Panc1 (cell line): ENCODE measurements at regions of chr3 and their contacts with region 1.

Region 1: DNA sequence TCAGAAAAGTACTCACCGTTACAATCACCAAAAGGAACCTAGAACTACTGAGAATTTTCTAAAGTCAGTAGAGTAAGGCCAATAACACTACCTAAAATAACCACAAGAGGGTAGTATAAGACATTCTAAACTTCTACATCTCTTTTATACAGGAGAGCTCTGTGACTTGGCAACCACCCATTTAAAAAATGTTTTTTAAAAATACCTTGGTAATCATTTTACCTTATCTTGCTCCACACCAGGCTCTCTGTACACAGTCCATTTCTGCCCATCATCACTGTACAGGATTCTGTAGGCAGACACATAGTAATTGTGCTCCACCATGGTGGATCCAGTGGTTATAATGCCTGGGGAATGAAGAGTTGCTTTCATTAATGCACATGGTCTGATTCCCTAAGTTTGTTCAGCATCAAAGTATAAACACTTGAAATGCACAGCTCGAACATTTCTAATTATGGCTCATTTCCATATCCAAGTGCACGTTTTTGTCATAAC is 54.5 kb downstream of the ST3GAL6 start:
- DNase-seq: peak; percentile 33
- ATAC-seq: peak; percentile 95
- H3K4me3 ChIP-seq: no peak overlapping the region
- H3K27ac ChIP-seq: no peak overlapping the region
- H3K4me1 ChIP-seq: no peaks in the 10 kb centered on the region
- H3K27me3 ChIP-seq: no peaks in the 10 kb centered on the region
- CTCF ChIP-seq: peak; percentile 73

Region 2: DNA sequence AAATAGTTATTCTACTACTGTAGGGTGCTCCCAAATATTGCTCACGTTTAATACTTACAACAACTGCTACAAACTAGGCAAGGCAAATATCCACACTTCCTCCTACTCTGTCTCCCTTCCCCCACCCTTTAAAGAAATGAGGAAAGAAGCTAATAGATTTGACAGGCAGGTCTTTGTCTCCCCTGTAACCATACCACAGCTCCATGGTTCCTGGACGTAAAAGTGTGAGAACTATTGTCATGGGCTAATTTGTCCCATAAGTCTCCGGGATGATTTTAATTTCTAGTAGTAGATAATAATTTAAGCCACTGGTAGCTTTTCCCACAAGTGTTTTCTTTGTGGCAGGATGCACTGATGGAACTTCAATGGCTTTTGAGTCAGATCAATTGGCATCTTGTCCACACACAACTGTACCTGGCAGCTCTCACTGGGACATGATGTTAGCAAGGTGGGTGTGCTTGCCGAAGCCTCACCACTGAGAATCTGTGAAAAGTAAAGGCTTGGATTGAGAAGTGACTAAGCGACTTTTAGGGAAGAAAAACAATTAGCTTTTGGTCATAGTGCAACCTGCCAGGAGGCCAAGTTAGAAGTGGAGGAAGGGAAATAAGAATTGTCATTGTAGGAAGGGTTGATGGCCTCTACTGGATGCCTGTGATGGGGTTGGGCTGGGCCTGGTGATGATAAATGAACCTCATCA is 222.8 kb before region 1 on chr3:
- CTCF ChIA-PET with region 1: no interaction called
- POLR2A ChIA-PET with region 1: no interaction called
- in situ Hi-C with region 1: no loop called
- intact Hi-C with region 1: loop called (anchors 2 kb)
- DNase-seq: no peak
- ATAC-seq: no peak
- H3K4me3 ChIP-seq: no peak overlapping the region
- H3K27ac ChIP-seq: no peak overlapping the region
- H3K4me1 ChIP-seq: peaks cover 5% of the 10 kb centered on the region
- H3K27me3 ChIP-seq: no peaks in the 10 kb centered on the region; the same call in 1 of the 2 replicates
- CTCF ChIP-seq: no peak

Region 3: GRCh38 chr3:98602078-98602678 is 215.4 kb before region 1 on chr3:
- CTCF ChIA-PET with region 1: interaction called, 7 read pairs
- POLR2A ChIA-PET with region 1: no interaction called
- in situ Hi-C with region 1: no loop called
- intact Hi-C with region 1: loop called (anchors 2 kb)
- DNase-seq: peak; percentile 36
- ATAC-seq: peak; percentile 92
- H3K4me3 ChIP-seq: no peak overlapping the region
- H3K27ac ChIP-seq: no peak overlapping the region
- H3K4me1 ChIP-seq: no peaks in the 10 kb centered on the region
- H3K27me3 ChIP-seq: peaks cover 2% of the 10 kb centered on the region; the same call in 1 of the 2 replicates
- CTCF ChIP-seq: peak; percentile 81

Region 4: GRCh38 chr3:98763076-98763475 is 54.5 kb before region 1 on chr3 and contains the start of gene ST3GAL6:
- CTCF ChIA-PET with region 1: no interaction called
- POLR2A ChIA-PET with region 1: no interaction called
- in situ Hi-C with region 1: no loop called
- intact Hi-C with region 1: no loop called
- DNase-seq: no peak
- ATAC-seq: no peak
- H3K4me3 ChIP-seq: no peak within 1 kb of the TSS
- H3K27ac ChIP-seq: no peak within 1 kb of the TSS
- H3K4me1 ChIP-seq: no peaks in the 10 kb centered on the region
- H3K27me3 ChIP-seq: peaks cover 16% of the 10 kb centered on the region; the same call in 1 of the 2 replicates
- CTCF ChIP-seq: no peak
- total RNA-seq, gene ST3GAL6: 0.15 TPM

Region 5: DNA sequence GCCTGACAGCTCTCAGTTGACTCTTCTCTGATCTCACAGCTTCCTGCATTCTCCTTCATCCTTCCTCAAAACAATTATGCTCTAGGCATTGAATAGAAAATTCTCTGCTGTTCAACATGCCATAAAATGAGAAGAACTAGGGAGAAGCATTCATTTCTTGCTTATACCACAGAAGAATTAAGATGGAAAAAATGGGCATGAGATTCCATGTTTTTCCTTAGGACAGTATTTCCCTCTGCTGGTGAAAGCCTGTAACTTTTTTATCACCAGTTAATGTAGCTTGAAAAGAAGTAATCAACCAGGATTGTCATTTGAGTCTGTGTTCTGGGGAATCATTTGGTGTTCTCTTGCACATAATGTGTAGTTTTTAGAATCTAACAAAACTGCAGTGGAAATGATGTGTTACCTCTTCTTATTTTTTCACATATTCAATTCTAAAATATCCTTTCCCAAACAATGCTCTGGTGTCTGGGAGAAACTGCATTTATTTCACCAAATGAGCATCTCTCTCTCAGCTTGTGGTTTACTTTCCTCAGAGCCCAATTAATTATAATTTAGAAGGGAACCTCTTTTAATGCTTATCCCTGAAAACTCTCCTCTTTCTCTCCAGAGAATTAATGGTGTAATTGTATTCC is 176.7 kb after region 1 on chr3:
- CTCF ChIA-PET with region 1: interaction called, 17 read pairs
- POLR2A ChIA-PET with region 1: no interaction called
- in situ Hi-C with region 1: no loop called
- intact Hi-C with region 1: loop called (anchors 1 kb)
- DNase-seq: no peak
- ATAC-seq: peak; percentile 70
- H3K4me3 ChIP-seq: no peak overlapping the region
- H3K27ac ChIP-seq: no peak overlapping the region
- H3K4me1 ChIP-seq: no peaks in the 10 kb centered on the region
- H3K27me3 ChIP-seq: peaks cover 2% of the 10 kb centered on the region; the same call in 1 of the 2 replicates
- CTCF ChIP-seq: peak; percentile 62; the same call in 1 of the 2 replicates

Region 6: GRCh38 chr3:99167071-99167470 is 349.5 kb after region 1 on chr3:
- CTCF ChIA-PET with region 1: no interaction called
- POLR2A ChIA-PET with region 1: no interaction called
- in situ Hi-C with region 1: no loop called
- intact Hi-C with region 1: loop called (anchors 5 kb)
- DNase-seq: no peak
- ATAC-seq: no peak
- H3K4me3 ChIP-seq: no peak overlapping the region
- H3K27ac ChIP-seq: no peak overlapping the region
- H3K4me1 ChIP-seq: no peaks in the 10 kb centered on the region
- H3K27me3 ChIP-seq: no peaks in the 10 kb centered on the region
- CTCF ChIP-seq: no peak

Region 7: GRCh38 chr3:99586701-99587100 is 769.1 kb after region 1 on chr3:
- CTCF ChIA-PET with region 1: no interaction called
- POLR2A ChIA-PET with region 1: interaction called, 10 read pairs
- in situ Hi-C with region 1: no loop called
- intact Hi-C with region 1: no loop called
- DNase-seq: no peak
- ATAC-seq: no peak
- H3K4me3 ChIP-seq: no peak overlapping the region
- H3K27ac ChIP-seq: no peak overlapping the region
- H3K4me1 ChIP-seq: no peaks in the 10 kb centered on the region
- H3K27me3 ChIP-seq: no peaks in the 10 kb centered on the region
- CTCF ChIP-seq: no peak

Region 8: DNA sequence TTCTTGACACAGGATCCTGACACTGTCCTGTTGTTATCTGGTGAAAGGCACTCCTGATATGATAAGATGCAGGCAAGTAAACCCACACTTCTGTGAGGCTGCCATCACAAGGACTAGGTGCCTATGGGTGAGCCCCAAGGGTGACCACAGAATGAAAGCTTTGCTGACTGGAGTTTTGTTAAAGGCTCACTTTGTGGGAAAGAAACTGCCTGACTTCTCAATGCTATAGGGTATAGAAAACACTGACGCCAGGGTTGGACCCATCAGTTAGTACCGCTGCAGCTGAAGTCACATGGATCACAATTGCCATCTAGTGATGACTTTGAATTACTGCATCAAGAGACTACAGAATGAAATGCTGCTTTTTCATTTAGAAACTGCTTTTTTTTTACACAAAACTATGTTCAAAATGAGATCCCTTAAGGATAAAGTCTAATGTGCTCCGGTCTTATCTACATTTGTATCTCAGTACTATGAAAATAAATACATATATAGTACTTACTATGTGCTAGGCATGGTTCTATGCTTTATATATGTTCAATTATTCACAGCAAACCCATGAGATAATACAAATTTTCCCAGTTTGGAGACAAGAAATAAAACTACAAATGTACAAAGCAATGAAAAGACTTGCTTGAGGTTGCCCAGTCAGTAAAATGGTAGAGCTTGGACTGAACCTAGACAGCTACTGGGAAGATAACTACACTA is 935.8 kb after region 1 on chr3:
- CTCF ChIA-PET with region 1: no interaction called
- POLR2A ChIA-PET with region 1: no interaction called
- in situ Hi-C with region 1: no loop called
- intact Hi-C with region 1: loop called (anchors 5 kb)
- DNase-seq: peak; percentile 43
- ATAC-seq: peak; percentile 94
- H3K4me3 ChIP-seq: no peak overlapping the region
- H3K27ac ChIP-seq: no peak overlapping the region
- H3K4me1 ChIP-seq: no peaks in the 10 kb centered on the region
- H3K27me3 ChIP-seq: peaks cover 30% of the 10 kb centered on the region
- CTCF ChIP-seq: peak; percentile 85